Head of caudate nucleus (tissue), 42 donors: ENCODE measurements at regions of chr2 and their contacts with region 1.

Region 1: GRCh38 chr2:200483729-200484198 is 26.1 kb downstream of the KCTD18 start:
- DNase-seq: no peak

Region 2: GRCh38 chr2:199979832-199980628 is 503.7 kb before region 1 on chr2:
- intact Hi-C with region 1: loop called (anchors 5 kb)
- DNase-seq: peak; percentile 73 to 97 (median 92)

Region 3: GRCh38 chr2:200533754-200534153 is 50.0 kb after region 1 on chr2:
- intact Hi-C with region 1: no loop called
- DNase-seq: no peak